ENCODE measurements at regions of chr1 and their contacts with region 1.

Region 1: DNA sequence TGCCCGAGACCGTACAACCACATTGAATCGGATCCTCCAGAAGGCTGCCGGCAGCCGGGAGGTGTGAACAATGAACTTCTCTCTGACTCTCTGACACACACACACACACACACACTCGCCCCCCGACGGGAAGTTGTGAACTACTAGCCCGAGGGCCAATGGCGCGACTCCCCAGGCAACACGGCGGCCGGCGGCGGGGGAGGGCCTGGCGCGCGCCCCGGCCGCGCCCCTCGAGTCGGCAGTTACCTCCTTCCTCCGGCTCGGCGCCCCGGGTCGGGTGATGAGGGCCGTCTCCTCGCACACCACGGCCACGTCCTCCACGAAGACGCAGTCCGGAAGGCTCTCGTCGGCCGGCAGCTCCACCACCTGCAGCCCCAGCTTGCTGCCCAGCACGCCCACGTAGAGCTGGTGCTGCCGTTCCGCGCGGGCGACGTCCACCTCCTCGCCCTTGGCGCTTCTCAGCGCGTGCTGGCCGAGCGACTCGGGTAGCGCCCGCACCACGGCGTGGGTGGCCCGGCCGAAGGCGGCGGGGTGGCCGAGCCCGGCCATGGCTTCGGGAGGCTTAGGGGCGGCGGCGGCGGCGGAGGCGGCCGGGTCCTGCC is 361 bp downstream of the DDAH1 start:
- DNase-seq: peak in 8 of 10 donors; percentile 14 to 76 (median 48)
- H3K4me3 ChIP-seq: peak overlapping the region; percentile 55 to 85 (median 72)
- H3K27ac ChIP-seq: peak overlapping the region in 52 of 59 donors; percentile 24 to 89 (median 78)
- H3K27me3 ChIP-seq: no peaks in the 10 kb centered on the region
- CTCF ChIP-seq: no peak

Region 2: GRCh38 chr1:85276215-85276977 is 188.2 kb before region 1 on chr1 and contains the start of gene BCL10:
- intact Hi-C with region 1: loop called in 1 of 2 experiments (anchors 10 kb)
- DNase-seq: peak; percentile 96 to 100 (median 99)
- H3K4me3 ChIP-seq: peak within 1 kb of the TSS; percentile 72 to 100 (median 92)
- H3K27ac ChIP-seq: peak within 1 kb of the TSS; percentile 7 to 97 (median 87)
- H3K27me3 ChIP-seq: no peaks in the 10 kb centered on the region
- CTCF ChIP-seq: peak in 23 of 56 donors; percentile 9 to 54 (median 36)
- total RNA-seq, gene BCL10: 7.7 to 24.2 (median 12.6) TPM

Region 3: DNA sequence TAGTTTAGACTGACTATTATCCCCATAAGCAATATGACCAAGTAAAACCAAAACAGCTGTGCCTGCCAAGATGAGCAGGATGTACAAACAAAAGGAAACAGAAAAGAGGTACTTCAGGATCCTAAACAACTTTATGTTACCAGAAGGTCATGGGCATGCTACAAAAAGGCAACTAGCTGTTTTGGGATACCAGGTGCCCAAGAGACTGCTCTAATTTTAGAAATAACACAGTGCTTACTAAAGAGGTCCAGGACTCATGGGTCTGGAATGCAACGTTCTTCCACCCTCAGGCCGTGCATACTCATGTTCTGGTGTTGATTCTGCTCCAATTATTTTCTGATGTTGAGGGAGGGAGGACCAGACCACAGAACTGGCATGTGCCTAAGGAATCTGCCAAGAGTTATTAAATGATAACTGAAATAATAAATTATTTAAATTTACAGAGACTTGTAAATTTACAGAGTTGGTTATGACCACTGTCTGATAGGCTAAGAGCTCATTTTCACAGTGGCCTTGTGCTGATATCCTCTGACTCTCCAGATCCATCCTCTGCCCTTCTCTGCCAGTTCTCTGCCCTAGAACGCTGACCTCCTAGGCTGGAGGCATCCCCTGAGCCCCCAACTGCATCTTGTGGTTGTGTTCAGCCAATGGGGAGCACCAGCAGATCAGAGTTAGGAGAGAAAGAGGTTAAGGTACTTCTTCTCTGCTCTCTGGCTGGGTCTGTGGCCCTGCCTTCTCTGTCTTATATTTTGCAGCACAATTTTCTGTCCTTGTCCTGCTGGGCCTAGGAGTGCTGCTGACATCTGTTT is 150.5 kb before region 1 on chr1:
- intact Hi-C with region 1: loop called in 1 of 2 experiments (anchors 10 kb)
- DNase-seq: no peak
- H3K4me3 ChIP-seq: no peak overlapping the region
- H3K27ac ChIP-seq: no peak overlapping the region
- H3K27me3 ChIP-seq: peaks cover 0 to 4% (median 0%) of the 10 kb centered on the region in 45 donors
- CTCF ChIP-seq: no peak

Region 4: DNA sequence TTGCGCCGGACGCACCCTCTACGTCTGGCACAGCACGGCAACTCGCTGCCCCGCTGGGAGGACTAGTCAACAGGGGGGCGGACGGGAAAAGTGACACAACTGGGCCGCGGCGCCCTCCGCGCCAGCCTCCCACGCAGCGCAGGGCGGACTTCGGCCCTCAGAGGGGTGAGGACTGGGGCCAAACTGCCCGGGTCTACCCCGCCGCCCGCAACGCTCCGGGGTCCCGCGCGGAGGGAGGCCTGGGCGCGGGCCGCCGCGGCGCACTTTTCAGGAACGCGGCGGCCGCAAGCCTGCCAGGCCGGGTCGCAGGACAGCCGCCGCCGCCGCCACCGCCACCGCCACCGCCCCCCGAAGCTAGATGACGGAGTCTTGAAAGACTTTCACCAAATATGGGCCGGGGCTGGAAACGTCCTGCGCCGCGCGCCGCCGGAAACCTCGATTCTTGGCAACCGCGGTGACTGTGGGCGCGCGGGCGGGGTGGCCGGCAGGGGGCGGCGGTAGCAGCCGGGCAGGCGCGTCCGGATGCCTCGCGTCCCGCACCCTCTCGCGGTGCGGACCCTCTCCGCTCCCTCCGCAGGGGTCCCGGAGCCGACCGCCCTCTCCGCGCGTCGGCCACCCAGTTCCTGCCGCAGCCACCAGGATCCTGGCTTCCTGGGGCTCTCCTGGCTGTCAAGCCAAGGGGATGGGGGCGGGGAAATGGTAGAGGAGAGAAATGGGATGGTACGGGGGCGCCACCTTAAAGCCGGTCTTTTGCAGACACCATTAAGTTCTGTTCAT is 112.2 kb after region 1 on chr1:
- intact Hi-C with region 1: loop called in 1 of 2 experiments (anchors 2 kb)
- DNase-seq: peak in 8 of 10 donors; percentile 24 to 71 (median 64)
- H3K4me3 ChIP-seq: peak overlapping the region; percentile 41 to 79 (median 69)
- H3K27ac ChIP-seq: peak overlapping the region in 58 of 59 donors; percentile 21 to 95 (median 86)
- H3K27me3 ChIP-seq: peaks cover 0 to 8% (median 0%) of the 10 kb centered on the region in 45 donors
- CTCF ChIP-seq: peak in 55 of 56 donors; percentile 23 to 74 (median 58)

Region 5: DNA sequence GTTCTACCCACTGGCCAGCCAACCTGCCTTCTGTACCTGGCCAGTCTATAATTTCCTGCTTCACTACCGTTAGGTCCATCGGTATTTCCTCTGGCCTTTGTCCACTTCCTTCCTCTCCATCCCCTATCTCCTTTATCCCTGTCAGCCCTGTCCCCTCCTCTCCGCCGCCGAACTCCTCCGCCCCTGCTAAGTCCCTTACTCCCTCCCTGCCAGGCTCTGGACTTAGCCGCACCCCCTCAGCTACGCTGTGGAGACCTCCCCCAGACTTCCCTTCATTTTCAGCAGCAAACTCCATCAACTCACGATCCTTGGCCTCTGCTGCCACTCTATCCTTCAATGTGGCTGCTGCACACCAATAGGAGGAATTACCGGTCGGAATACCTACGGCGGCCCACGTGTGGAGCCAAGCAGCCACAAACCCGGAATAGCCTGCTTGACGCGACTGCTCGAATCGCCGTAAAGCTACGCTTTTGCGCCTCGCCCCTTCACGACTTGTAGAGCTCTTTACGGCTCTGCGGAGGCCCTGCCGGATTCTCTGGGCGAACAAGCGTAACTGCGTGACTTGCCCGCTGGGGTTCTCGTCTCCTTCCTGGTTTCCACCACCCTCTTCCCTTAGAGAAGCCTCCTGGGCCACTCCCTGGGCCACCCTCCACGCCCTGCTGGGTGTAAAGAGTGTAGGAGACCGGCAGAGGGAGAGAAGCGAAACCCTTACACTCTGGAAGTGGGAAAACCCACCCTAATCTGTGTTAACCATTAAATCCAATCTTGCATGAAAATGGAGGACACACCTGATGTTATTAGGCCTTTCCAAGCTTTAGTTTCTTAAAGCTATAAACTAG is 243.6 kb after region 1 on chr1 and contains the start of gene ZNHIT6:
- intact Hi-C with region 1: loop called in 1 of 2 experiments (anchors 10 kb)
- DNase-seq: peak; percentile 69 to 95 (median 90)
- H3K4me3 ChIP-seq: peak within 1 kb of the TSS; percentile 61 to 98 (median 86)
- H3K27ac ChIP-seq: peak within 1 kb of the TSS in 58 of 59 donors; percentile 71 to 98 (median 92)
- H3K27me3 ChIP-seq: no peaks in the 10 kb centered on the region
- CTCF ChIP-seq: peak in 41 of 56 donors; percentile 4 to 57 (median 35)
- total RNA-seq, gene ZNHIT6: 18.2 to 31.5 (median 22.8) TPM

Measured in dorsolateral prefrontal cortex (tissue), 120 donors.